Activated CD4-positive, alpha-beta memory T cell treated with anti-CD3 and anti-CD28 coated beads for 36 hours (primary cell): ENCODE measurements at regions of chr17 and their contacts with region 1.

Region 1: GRCh38 chr17:42405963-42406495 is 17.0 kb downstream of the CAVIN1 start:
- DNase-seq: peak; percentile 90
- H3K4me3 Mint-ChIP-seq: peak overlapping the region; percentile 12
- H3K27ac Mint-ChIP-seq: peak overlapping the region; percentile 8
- H3K4me1 Mint-ChIP-seq: peaks cover 16% of the 10 kb centered on the region
- H3K27me3 Mint-ChIP-seq: no peaks in the 10 kb centered on the region

Region 2: DNA sequence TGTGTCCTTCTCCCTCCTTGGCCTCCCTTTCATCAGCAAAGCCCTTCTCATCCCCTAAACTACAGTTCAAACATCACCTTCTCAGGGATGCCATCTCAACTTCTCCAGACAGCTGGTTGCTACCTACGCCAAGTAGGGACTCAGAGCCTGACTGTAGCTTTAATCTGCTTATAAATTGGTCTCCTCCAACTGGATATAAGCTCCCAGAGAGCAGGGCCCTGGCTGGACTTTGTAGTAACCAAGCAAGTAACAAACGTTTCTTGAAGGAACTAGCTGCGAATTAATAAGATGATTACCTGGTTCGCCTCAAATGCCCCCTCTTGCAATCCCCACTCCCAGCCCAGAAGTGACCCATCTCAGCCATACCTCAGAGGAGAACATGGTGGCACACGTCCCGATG is 523.3 kb before region 1 on chr17:
- CTCF ChIA-PET with region 1: no interaction called
- POLR2A ChIA-PET with region 1: no interaction called
- intact Hi-C with region 1: no loop called
- DNase-seq: no peak
- H3K4me3 Mint-ChIP-seq: no peak overlapping the region
- H3K27ac Mint-ChIP-seq: no peak overlapping the region
- H3K4me1 Mint-ChIP-seq: no peaks in the 10 kb centered on the region
- H3K27me3 Mint-ChIP-seq: no peaks in the 10 kb centered on the region

Region 3: GRCh38 chr17:42221937-42222745 is 183.9 kb before region 1 on chr17:
- CTCF ChIA-PET with region 1: interaction called, 46 read pairs
- POLR2A ChIA-PET with region 1: no interaction called
- intact Hi-C with region 1: loop called (anchors 2 kb)
- DNase-seq: peak; percentile 67
- H3K4me3 Mint-ChIP-seq: no peak overlapping the region
- H3K27ac Mint-ChIP-seq: peak overlapping the region; percentile 44
- H3K4me1 Mint-ChIP-seq: peaks cover 3% of the 10 kb centered on the region
- H3K27me3 Mint-ChIP-seq: no peaks in the 10 kb centered on the region

Region 4: DNA sequence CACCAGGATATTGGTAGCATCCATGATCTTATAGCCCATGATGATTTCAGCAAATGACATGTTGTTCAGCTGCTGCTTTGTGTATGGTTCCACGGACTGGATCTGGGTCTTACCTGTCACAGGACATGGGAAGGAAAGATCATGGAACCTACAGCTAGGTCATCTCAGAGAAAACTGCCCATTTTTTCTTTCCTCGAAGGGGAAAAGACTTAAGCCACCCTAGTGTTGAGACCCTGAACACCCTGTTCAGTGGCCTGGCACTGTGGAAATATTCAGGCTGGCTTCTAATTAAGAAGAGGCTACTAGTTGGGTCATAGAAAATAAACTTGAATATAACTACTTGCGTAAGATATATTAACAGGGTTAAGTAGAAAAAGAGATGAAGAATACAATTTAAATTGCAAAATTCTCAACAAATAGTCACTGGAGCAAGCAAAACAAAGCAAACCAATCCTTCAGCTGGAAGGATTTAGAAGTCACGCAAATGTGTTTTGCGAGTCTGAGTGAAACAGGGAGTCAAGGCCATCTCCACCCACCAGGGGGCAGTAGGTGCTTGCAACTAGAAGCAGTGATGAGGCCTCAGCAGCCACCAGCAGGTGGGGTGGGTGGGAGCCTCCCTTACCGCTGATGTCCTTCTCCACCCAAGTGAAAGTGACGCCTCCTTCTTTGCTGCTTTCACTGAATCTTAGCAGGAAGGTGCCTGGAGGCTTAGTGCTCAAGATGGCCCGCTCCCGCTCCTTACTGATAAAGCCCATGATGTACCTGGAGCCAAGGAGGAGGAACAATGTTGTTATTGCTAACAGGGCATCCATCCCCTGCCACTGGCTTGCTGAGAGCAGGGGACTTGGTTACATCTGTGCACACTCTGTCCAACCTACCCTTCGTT is 83.4 kb before region 1 on chr17:
- CTCF ChIA-PET with region 1: interaction called, 281 read pairs
- POLR2A ChIA-PET with region 1: interaction called, 4 read pairs
- intact Hi-C with region 1: loop called (anchors 1 kb)
- DNase-seq: peak; percentile 96
- H3K4me3 Mint-ChIP-seq: no peak overlapping the region
- H3K27ac Mint-ChIP-seq: peak overlapping the region; percentile 67
- H3K4me1 Mint-ChIP-seq: peaks cover 37% of the 10 kb centered on the region
- H3K27me3 Mint-ChIP-seq: no peaks in the 10 kb centered on the region

Region 5: DNA sequence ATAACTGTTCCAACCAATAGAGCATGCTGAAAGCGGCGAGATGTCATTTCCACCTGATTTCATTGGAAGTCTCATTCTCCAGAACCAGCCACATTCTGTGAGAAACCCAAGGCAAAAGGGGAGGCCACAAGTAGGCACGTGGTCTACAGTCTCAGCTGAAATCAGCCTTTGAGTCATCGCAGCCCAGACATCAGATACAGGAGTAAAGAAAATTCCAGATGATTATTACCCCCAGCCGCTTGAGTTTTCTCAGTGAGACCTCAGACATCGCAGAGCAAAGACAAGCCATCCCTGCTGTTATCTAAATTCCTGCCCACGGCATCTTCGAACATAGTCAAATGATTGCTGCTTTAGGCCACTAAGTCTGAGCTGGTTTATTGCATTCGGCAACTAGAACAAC is 40.9 kb before region 1 on chr17:
- CTCF ChIA-PET with region 1: interaction called, 11 read pairs
- POLR2A ChIA-PET with region 1: no interaction called
- intact Hi-C with region 1: no loop called
- DNase-seq: peak; percentile 53
- H3K4me3 Mint-ChIP-seq: no peak overlapping the region
- H3K27ac Mint-ChIP-seq: peak overlapping the region; percentile 71
- H3K4me1 Mint-ChIP-seq: peaks cover 71% of the 10 kb centered on the region
- H3K27me3 Mint-ChIP-seq: no peaks in the 10 kb centered on the region

Region 6: GRCh38 chr17:42422958-42423712 is 17.1 kb after region 1 on chr17 and contains the start of gene CAVIN1:
- CTCF ChIA-PET with region 1: interaction called, 22 read pairs
- POLR2A ChIA-PET with region 1: no interaction called
- intact Hi-C with region 1: no loop called
- DNase-seq: peak; percentile 34
- H3K4me3 Mint-ChIP-seq: peak within 1 kb of the TSS; percentile 68
- H3K27ac Mint-ChIP-seq: no peak within 1 kb of the TSS
- H3K4me1 Mint-ChIP-seq: peaks cover 17% of the 10 kb centered on the region
- H3K27me3 Mint-ChIP-seq: peaks cover 24% of the 10 kb centered on the region
- total RNA-seq, gene CAVIN1: 2.5 to 2.9 TPM